OCI-LY7 (cell line): ENCODE measurements at regions of chr7 and their contacts with region 1.

Region 1: GRCh38 chr7:100101016-100101862 is at the starts of genes AP4M1 and MCM7:
- DNase-seq: peak; percentile 99
- H3K4me3 ChIP-seq: peak within 1 kb of the TSS; percentile 90
- H3K27ac ChIP-seq: peak within 1 kb of the TSS; percentile 92
- H3K4me1 ChIP-seq: peaks cover 25% of the 10 kb centered on the region
- CTCF ChIP-seq: no peak
- total RNA-seq, gene AP4M1: 14.1 and 25.0 TPM in 2 replicates
- total RNA-seq, gene MCM7: 424 and 475 TPM in 2 replicates

Region 2: DNA sequence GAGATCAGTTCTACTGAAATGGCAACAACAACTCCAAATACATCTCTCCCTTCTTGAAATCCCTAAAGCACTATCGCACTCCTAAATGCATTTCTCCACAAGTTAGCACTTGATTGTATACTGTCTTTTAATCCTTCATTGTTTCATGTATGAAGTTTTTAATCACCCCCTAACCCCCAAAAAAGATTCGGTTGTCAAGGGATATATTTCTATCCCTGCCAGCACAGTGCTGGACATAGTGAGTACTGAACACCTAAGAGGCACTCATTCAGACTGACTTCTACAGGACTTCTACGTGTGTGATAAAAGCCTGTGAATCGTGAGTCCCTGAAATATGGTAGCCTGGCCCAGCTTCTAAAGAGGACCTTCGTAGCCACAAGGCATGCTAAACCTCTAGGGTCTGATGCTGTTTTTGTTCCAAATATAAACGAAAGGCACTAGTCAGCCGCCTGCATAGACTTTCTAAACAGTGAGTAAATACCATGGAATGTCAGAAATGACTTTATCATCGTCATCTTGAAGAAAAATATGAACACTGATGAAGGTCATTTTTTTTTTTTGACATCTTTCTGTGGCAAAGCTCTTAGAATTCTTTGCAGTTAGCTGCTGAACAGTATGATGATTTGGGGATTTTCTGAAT is 66.2 kb before region 1 on chr7:
- CTCF ChIA-PET with region 1: no interaction called
- POLR2A ChIA-PET with region 1: no interaction called
- intact Hi-C with region 1: no loop called
- DNase-seq: no peak
- H3K4me3 ChIP-seq: no peak overlapping the region
- H3K27ac ChIP-seq: no peak overlapping the region
- H3K4me1 ChIP-seq: peaks cover 1% of the 10 kb centered on the region
- CTCF ChIP-seq: no peak

Region 3: GRCh38 chr7:100088621-100089457 is 12.4 kb before region 1 on chr7 and contains the start of gene COPS6:
- CTCF ChIA-PET with region 1: no interaction called
- POLR2A ChIA-PET with region 1: interaction called, 13 read pairs
- intact Hi-C with region 1: no loop called
- DNase-seq: peak; percentile 81
- H3K4me3 ChIP-seq: peak within 1 kb of the TSS; percentile 90
- H3K27ac ChIP-seq: peak within 1 kb of the TSS; percentile 72
- H3K4me1 ChIP-seq: peaks cover 24% of the 10 kb centered on the region
- CTCF ChIP-seq: no peak
- total RNA-seq, gene COPS6: 57.6 and 60.5 TPM in 2 replicates

Region 4: DNA sequence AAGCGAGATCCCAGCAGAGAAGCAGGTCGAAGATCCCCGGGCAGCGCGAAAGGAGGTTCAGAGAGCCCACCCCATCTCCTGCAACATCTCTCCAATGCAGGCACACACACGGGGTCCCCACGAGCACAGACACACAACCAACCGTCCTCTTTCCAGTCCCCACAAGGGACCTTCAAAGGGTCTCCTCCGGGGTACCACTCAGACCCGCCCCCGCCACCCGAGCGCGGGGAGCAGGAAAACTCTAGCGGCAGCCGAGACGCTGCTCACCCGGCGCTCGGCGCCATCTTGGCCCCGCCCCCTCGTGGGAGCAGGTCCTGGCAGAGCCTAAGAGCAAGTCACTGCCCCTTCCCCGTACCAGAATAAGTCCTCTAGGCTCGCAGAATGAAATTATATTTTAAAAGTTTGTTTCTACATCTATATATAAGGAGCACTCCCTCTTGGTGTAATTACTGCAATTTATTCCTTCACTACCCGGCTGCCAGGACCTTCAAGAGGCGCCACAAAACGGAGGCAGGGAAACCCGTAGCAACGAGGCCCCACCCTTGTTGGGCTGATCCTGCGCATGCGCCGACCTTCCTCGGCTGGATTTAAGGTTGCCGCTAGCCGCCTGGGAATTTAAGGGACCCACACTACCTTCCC is 17.9 kb after region 1 on chr7 and contains the starts of genes CNPY4 and TAF6:
- CTCF ChIA-PET with region 1: no interaction called
- POLR2A ChIA-PET with region 1: interaction called, 22 read pairs
- intact Hi-C with region 1: loop called (anchors 1 kb)
- DNase-seq: peak; percentile 98
- H3K4me3 ChIP-seq: peak within 1 kb of the TSS; percentile 80
- H3K27ac ChIP-seq: peak within 1 kb of the TSS; percentile 73
- H3K4me1 ChIP-seq: peaks cover 13% of the 10 kb centered on the region
- CTCF ChIP-seq: no peak
- total RNA-seq, gene CNPY4: 20.9 and 24.5 TPM in 2 replicates
- total RNA-seq, gene TAF6: 28.0 and 35.4 TPM in 2 replicates

Region 5: GRCh38 chr7:100126931-100127865 is 26.0 kb after region 1 on chr7 and contains the start of gene MBLAC1:
- CTCF ChIA-PET with region 1: interaction called, 5 read pairs
- POLR2A ChIA-PET with region 1: interaction called, 22 read pairs
- intact Hi-C with region 1: loop called (anchors 2 kb)
- DNase-seq: peak; percentile 95
- H3K4me3 ChIP-seq: peak within 1 kb of the TSS; percentile 73
- H3K27ac ChIP-seq: peak within 1 kb of the TSS; percentile 94
- H3K4me1 ChIP-seq: peaks cover 48% of the 10 kb centered on the region
- CTCF ChIP-seq: no peak
- total RNA-seq, gene MBLAC1: 4.4 and 4.8 TPM in 2 replicates